Posterior cingulate gyrus (tissue), 11 donors: ENCODE measurements at regions of chr14 and their contacts with region 1.

Region 1: DNA sequence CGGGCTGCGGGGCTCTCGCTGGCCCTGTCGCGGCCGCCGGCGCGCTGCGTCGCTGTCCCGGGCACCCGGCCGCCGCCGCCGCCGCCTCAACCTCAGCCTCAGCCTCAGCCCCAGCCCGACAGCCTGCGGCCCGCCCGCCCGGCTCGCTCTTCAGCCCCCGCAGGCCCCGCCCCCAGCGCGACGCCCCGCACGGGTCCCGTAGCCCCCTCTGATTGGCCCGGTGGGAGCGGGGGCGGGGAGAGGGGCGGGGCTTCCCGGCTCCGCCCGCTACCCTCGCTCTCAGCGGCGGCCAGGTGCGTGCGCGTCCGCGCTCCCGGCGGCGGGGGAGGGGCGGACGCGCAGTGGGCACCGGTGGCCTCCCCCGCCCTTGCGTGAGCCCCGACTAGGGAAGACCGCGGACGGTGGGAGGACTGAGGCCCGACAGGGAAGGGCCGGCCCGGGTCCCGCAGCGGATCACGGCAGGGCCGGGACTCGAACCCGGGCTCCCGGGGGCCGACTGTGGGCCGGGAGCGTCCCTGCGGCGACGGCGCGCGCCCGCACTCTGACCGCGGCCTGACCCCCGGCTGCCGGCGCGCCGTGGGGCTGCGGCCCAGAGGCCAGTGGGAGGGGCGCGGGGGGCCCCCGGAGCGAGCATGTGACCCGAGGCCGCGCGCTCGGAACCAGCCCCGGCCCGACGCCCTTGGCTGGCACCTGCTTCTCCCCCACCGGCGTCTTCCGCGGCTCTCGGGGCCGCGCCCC is at the start of gene PPP1R13B:
- DNase-seq: peak; percentile 85 to 99 (median 92)

Region 2: GRCh38 chr14:103920981-103921854 is 73.6 kb after region 1 on chr14:
- intact Hi-C with region 1: loop called (anchors 1 kb)
- DNase-seq: peak; percentile 91 to 99 (median 92)